IMR-90 (cell line): ENCODE measurements at regions of chr17 and their contacts with region 1.

Region 1: DNA sequence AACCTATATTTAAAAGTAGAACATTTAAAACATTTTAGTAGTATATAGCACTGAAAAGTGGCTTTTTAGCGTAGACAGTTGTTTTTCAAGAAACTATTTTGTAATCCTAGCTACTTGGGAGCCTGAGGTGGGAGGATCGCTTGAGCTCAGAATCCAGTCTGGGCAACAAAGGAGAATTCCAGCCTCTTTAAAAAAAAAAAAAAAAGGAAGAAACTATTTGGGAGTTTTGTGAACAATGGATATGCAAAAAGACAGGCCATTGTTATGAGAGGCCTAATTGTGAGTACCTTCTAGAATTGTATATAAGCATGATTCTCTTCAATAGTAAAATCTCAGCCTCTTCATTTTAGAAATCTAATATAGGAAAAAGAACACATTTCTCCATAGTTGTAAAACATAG is 17.6 kb downstream of the OMG start:
- DNase-seq: no peak
- ATAC-seq: no peak
- H3K4me3 ChIP-seq: no peak overlapping the region
- H3K27ac ChIP-seq: no peak overlapping the region
- H3K4me1 ChIP-seq: no peaks in the 10 kb centered on the region
- H3K27me3 ChIP-seq: no peaks in the 10 kb centered on the region
- CTCF ChIP-seq: no peak
- POLR2A ChIP-seq: no peak
- RAD21 ChIP-seq: no peak

Region 2: DNA sequence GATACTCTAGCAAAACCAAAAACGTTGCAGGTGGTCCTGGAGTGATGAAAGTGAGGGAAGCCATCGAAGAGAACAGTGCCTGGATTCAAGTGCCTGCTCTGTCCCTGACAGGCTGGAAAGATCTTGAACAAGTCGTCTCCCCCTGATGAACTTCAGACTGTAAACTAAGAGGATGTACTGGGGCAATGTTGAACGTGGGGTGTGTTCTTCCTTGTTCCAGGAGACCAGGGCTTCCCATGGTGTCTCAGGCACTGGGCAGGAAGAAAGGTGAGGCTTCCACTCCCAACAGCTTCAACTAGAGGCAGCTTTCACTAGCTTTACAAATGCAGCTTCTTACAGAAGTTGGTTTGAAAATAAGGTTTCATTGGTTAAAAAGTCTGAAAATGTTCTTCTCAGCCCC is 206.0 kb before region 1 on chr17:
- CTCF ChIA-PET with region 1: no interaction called
- POLR2A ChIA-PET with region 1: interaction called, 19 read pairs
- dilution Hi-C with region 1: no loop called
- in situ Hi-C with region 1: no loop called
- intact Hi-C with region 1: no loop called
- DNase-seq: no peak
- ATAC-seq: no peak
- H3K4me3 ChIP-seq: no peak overlapping the region
- H3K27ac ChIP-seq: no peak overlapping the region
- H3K4me1 ChIP-seq: peaks cover 10% of the 10 kb centered on the region
- H3K27me3 ChIP-seq: no peaks in the 10 kb centered on the region
- CTCF ChIP-seq: no peak
- POLR2A ChIP-seq: no peak
- RAD21 ChIP-seq: no peak

Region 3: GRCh38 chr17:31339906-31340661 is 60.7 kb after region 1 on chr17:
- CTCF ChIA-PET with region 1: no interaction called
- POLR2A ChIA-PET with region 1: no interaction called
- dilution Hi-C with region 1: no loop called
- in situ Hi-C with region 1: no loop called
- intact Hi-C with region 1: no loop called
- DNase-seq: peak; percentile 90
- ATAC-seq: peak; percentile 96
- H3K4me3 ChIP-seq: no peak overlapping the region
- H3K27ac ChIP-seq: no peak overlapping the region
- H3K4me1 ChIP-seq: peaks cover 3% of the 10 kb centered on the region; the same call in 1 of the 2 replicates
- H3K27me3 ChIP-seq: no peaks in the 10 kb centered on the region
- CTCF ChIP-seq: no peak
- POLR2A ChIP-seq: no peak
- RAD21 ChIP-seq: 0 out of 2 replicates have a peak, but pooled peaks have one; percentile 3